ENCODE measurements at regions of chr4 and their contacts with region 1.

Region 1: GRCh38 chr4:84971319-84971932 is 4.9 kb upstream of the WDFY3 start:
- DNase-seq: peak in 1 of 2 donors; percentile 70
- H3K4me3 ChIP-seq: no peak overlapping the region
- H3K27ac ChIP-seq: no peak overlapping the region
- H3K4me1 ChIP-seq: peaks cover 0 to 25% (median 3%) of the 10 kb centered on the region in 4 donors
- H3K27me3 ChIP-seq: no peaks in the 10 kb centered on the region
- CTCF ChIP-seq: peak in 5 of 7 experiments; percentile 31 to 45 (median 41)
- EP300 ChIP-seq: no peak
- POLR2A ChIP-seq: no peak

Region 2: DNA sequence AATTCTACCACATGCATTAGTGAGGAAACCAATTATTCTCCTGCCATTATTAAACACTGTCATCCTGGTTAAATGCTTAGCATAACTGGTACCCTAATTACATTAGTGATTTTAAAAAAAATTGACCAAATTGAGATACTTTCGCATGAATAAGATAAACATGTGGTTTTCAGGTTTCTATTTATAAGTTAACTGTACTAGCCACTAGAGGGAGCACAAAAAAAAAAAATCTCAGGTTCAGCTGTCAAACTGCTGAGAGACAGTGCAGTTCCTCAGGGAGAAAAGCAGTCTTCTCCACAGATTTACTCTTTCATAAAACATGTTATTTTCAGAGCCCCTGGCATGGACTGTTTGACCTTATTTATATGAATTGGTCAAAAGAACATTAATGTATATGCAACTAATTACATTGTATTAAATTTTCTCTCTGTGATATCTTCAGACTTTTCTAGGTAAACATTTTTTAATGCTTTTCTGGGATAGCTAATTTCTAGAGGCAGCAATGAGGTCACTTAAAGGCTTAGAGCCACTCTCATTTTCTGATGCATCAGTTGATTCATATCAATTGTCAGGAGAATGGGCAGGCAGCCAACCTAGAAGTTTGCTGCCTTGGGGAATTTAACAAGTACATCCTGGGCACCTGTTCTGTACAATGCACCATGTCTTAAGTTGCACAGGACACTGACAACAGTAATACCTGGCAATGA is 221.0 kb before region 1 on chr4:
- intact Hi-C with region 1: loop called (anchors 5 kb)
- DNase-seq: peak in 1 of 2 donors; percentile 70
- H3K4me3 ChIP-seq: no peak overlapping the region
- H3K27ac ChIP-seq: no peak overlapping the region
- H3K4me1 ChIP-seq: peaks cover 0 to 13% (median 6%) of the 10 kb centered on the region in 4 donors
- H3K27me3 ChIP-seq: no peaks in the 10 kb centered on the region
- CTCF ChIP-seq: peak in 5 of 7 experiments; percentile 31 to 59 (median 53)
- EP300 ChIP-seq: no peak
- POLR2A ChIP-seq: no peak

Measured in stomach (tissue), 19 donors.